B cell (primary cell): ENCODE measurements at regions of chr2 and their contacts with region 1.

Region 1: DNA sequence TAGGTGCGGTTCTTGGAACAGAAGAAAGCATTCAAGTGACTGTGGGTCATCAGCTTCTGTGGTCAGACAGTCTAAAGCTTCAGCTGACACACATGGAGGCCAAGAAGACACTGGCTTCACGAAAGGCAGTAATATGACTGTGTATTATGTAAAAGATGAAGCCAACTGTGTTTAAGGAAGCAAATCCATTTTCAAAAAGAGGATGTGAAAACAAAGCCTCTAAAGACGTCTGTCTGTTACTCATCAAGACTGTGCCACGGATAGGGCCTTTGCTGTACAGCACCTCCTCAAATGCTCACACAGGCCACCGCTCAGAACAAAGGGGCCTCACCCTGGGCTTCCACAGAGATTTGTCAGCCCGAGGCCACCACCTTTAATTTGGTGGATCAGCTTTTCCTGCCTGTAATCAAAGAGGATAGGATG is 21.1 kb upstream of the TMEM163 start:
- DNase-seq: peak; percentile 91
- ATAC-seq: peak; percentile 81
- H3K4me3 ChIP-seq: peak overlapping the region in 2 of 5 experiments; percentile 28 to 46
- H3K4me3 Mint-ChIP-seq: peak overlapping the region; percentile 62
- H3K27ac ChIP-seq: peak overlapping the region; percentile 86 to 90
- H3K27ac Mint-ChIP-seq: peak overlapping the region; percentile 93
- H3K4me1 ChIP-seq: peaks cover 64 to 68% of the 10 kb centered on the region in 2 donors
- H3K4me1 Mint-ChIP-seq: peaks cover 71% of the 10 kb centered on the region
- H3K27me3 ChIP-seq: no peaks in the 10 kb centered on the region
- H3K27me3 Mint-ChIP-seq: no peaks in the 10 kb centered on the region
- CTCF ChIP-seq: no peak

Region 2: DNA sequence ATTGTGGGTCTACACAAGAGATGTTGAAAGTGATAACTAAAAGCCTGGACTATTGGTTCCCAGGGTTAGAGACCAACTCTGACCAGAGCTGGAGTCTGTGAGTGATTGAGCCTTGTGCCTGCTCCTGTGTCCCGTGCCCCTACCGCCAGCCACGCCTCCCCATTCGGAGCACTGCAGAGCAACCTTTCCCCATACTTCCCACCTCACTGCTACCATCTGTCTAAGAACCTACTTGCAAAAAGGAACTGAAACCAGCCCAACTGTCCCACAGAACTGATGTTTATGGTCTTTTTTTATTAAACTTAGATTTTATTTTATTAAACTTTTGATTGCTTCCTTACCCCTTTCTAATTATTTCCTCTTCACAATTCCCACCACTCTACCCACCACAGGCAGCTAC is 786.4 kb before region 1 on chr2:
- CTCF ChIA-PET with region 1: no interaction called
- POLR2A ChIA-PET with region 1: no interaction called
- intact Hi-C with region 1: loop called (anchors 10 kb)
- DNase-seq: peak; percentile 83
- ATAC-seq: peak; percentile 88
- H3K4me3 ChIP-seq: peak overlapping the region in 1 of 5 experiments; percentile 18
- H3K4me3 Mint-ChIP-seq: peak overlapping the region; percentile 64
- H3K27ac ChIP-seq: peak overlapping the region; percentile 63 to 73
- H3K27ac Mint-ChIP-seq: peak overlapping the region; percentile 85
- H3K4me1 ChIP-seq: peaks cover 75 to 76% of the 10 kb centered on the region in 2 donors
- H3K4me1 Mint-ChIP-seq: peaks cover 74% of the 10 kb centered on the region
- H3K27me3 ChIP-seq: no peaks in the 10 kb centered on the region
- H3K27me3 Mint-ChIP-seq: no peaks in the 10 kb centered on the region
- CTCF ChIP-seq: no peak

Region 3: DNA sequence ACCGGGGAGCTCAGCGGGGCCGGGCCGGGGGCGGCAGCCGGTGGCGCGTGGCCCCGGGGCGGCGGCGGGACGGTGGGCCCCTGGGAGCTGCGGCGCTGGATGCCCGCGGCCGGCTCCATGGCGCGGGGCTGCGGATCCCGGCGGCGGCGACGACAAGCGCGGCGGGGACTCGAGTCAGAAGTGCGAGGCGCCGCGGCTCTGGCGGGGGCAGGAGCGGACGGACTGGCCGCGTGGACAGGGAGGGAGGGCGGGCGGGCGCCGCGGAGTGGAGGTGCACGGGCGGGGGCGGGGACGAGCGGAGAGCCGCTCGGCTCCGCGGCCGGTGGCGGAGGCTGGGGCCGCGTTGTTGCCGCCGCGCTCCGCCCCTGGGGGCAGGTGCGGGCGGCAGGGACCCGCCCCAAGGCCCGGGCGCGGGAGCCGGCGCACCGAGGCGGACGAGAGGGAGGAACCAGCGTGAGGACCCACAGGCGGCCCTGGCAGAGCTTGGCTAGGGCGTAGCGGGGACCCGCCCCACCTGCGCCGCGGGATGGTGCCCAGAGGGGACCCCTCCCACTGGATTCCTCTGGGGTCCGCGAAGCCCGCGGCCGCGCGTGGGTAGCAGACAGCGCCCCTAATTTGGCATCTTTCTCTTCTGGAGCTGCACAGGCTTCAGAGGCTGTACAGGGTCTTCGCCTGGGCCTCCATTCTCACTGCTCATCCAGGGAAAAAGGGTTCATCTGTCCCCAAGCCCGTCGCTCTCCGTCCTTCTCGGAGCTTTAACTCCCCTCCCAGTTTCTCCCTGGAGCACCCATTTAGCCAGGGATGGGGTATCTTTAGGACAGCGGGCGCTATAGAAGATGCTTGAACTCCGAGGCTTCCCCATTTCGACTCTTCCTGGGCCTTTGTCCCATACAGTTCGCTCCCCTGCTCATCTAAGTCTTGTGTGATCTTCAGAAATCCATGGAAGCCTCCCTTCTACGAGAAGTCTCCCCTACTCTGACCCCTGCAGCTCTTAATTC is 20.8 kb before region 1 on chr2 and contains the start of gene TMEM163:
- CTCF ChIA-PET with region 1: interaction called, 5 read pairs
- POLR2A ChIA-PET with region 1: interaction called, 7 read pairs
- intact Hi-C with region 1: loop called (anchors 1 kb)
- DNase-seq: peak; percentile 76
- ATAC-seq: peak; percentile 83
- H3K4me3 ChIP-seq: peak within 1 kb of the TSS in 4 of 5 experiments; percentile 43 to 60 (median 55)
- H3K4me3 Mint-ChIP-seq: peak within 1 kb of the TSS; percentile 87
- H3K27ac ChIP-seq: no peak within 1 kb of the TSS
- H3K27ac Mint-ChIP-seq: peak within 1 kb of the TSS; percentile 21
- H3K4me1 ChIP-seq: peaks cover 16 to 21% of the 10 kb centered on the region in 2 donors
- H3K4me1 Mint-ChIP-seq: peaks cover 35% of the 10 kb centered on the region
- H3K27me3 ChIP-seq: peaks cover 0 to 39% (median 15%) of the 10 kb centered on the region in 4 experiments
- H3K27me3 Mint-ChIP-seq: peaks cover 27% of the 10 kb centered on the region
- CTCF ChIP-seq: no peak
- total RNA-seq, gene TMEM163: 5.6 and 6.2 TPM in 2 replicates

Region 4: GRCh38 chr2:134758633-134759032 is 18.7 kb after region 1 on chr2:
- CTCF ChIA-PET with region 1: interaction called, 8 read pairs
- POLR2A ChIA-PET with region 1: interaction called, 6 read pairs
- intact Hi-C with region 1: loop called (anchors 1 kb)
- DNase-seq: peak; percentile 84
- ATAC-seq: peak; percentile 96
- H3K4me3 ChIP-seq: peak overlapping the region in 1 of 5 experiments; percentile 10
- H3K4me3 Mint-ChIP-seq: peak overlapping the region; percentile 59
- H3K27ac ChIP-seq: no peak overlapping the region
- H3K27ac Mint-ChIP-seq: peak overlapping the region; percentile 73
- H3K4me1 ChIP-seq: peaks cover 18 to 22% of the 10 kb centered on the region in 2 donors
- H3K4me1 Mint-ChIP-seq: peaks cover 26% of the 10 kb centered on the region
- H3K27me3 ChIP-seq: no peaks in the 10 kb centered on the region
- H3K27me3 Mint-ChIP-seq: peaks cover 3% of the 10 kb centered on the region
- CTCF ChIP-seq: no peak

Region 5: DNA sequence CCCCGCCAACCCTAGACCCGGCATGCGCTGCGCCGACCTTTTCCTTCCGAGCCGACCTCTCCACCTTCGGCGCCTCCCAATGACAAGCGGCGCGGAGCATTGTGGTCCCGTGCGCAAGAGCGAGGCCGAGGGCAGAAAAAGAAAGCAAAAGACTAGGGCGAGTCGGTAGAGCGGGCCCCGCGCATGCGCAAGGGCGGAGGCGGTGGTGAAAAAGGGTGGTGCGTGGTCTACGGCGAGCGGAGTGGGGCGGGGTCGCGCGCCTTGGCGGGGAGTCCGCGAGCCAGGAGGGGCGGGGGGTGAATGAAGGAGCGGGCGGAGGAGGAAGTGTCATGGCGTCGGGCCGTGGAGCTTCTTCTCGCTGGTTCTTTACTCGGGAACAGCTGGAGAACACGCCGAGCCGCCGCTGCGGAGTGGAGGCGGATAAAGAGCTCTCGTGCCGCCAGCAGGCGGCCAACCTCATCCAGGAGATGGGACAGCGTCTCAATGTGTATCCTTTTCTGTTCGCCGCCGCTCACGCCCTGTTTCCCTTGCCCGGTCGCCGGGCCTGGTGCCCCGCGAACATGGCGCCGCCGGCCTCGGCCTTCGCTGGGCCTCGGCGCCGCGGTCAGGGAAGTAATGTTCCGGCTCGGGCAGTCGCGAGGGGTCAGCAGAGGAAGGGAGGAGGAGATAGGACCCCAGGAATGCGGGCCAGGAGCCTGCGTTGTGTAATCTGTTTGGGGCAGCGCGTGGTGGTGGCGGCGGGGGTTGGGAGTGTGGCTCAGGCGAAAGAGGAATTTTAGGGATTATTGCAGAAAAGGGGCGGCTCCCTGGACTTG is 178.8 kb after region 1 on chr2 and contains the start of gene CCNT2:
- CTCF ChIA-PET with region 1: interaction called, 3 read pairs
- POLR2A ChIA-PET with region 1: no interaction called
- intact Hi-C with region 1: loop called (anchors 1 kb)
- DNase-seq: peak; percentile 100
- ATAC-seq: peak; percentile 82
- H3K4me3 ChIP-seq: peak within 1 kb of the TSS; percentile 78 to 98 (median 93)
- H3K4me3 Mint-ChIP-seq: peak within 1 kb of the TSS; percentile 85
- H3K27ac ChIP-seq: peak within 1 kb of the TSS; percentile 94 to 96
- H3K27ac Mint-ChIP-seq: peak within 1 kb of the TSS; percentile 94
- H3K4me1 ChIP-seq: peaks cover 31 to 32% of the 10 kb centered on the region in 2 donors
- H3K4me1 Mint-ChIP-seq: peaks cover 48% of the 10 kb centered on the region
- H3K27me3 ChIP-seq: no peaks in the 10 kb centered on the region
- H3K27me3 Mint-ChIP-seq: no peaks in the 10 kb centered on the region
- CTCF ChIP-seq: no peak
- total RNA-seq, gene CCNT2: 86.7 and 91.0 TPM in 2 replicates